ENCODE measurements at regions of chr3 and their contacts with region 1.

Region 1: DNA sequence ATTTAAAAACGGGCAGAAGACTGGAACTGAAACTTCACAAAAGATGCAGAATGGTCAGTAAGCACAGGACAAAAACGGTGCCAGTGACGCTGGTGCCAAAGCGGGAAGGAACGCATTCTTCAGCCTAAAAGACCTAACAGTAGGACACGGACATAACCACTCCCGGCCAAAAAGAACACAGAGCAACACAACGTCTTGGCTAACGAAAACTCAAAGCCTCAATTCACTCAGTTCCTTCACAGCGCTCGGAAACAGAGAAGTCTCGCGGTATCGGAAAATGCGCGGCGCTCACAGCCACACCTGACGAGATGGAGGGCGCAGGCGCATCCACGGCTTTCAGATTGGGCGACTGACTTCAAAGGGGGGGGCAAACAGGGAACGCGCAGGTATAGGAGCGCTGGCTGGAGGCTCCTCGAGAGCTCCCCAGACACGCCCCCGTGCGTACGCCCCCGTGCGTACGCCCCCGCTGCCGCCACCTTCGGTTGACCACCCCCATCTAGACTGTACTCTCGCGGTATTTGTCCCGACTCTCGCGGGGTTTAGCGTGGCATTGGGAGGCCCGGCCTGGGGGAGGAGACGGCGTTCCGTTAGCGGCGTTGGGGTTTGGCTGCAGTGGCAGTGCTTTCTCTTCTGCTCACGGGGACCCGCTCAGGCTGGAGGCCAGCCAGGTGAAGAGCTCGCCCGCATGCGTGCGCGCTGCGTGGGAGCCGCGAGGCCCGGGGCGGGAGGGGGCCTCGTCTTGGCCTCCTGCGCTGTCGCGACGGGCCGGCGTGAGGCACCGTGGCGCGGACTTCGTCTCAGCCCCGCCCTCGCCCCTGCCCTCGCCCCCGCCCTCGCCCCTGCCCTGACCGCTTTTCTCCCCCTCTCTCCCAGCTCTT is at the start of gene NKTR:
- DNase-seq: peak; percentile 99 to 100 (median 99)
- H3K4me3 ChIP-seq: peak within 1 kb of the TSS; percentile 92
- H3K4me3 Mint-ChIP-seq: peak within 1 kb of the TSS; percentile 89 to 98 (median 94)
- H3K27ac ChIP-seq: peak within 1 kb of the TSS; percentile 81
- H3K27ac Mint-ChIP-seq: peak within 1 kb of the TSS; percentile 95 to 100 (median 97)
- H3K4me1 ChIP-seq: peaks cover 33% of the 10 kb centered on the region
- H3K4me1 Mint-ChIP-seq: peaks cover 35 to 48% (median 40%) of the 10 kb centered on the region in 3 donors
- H3K27me3 ChIP-seq: no peaks in the 10 kb centered on the region
- H3K27me3 Mint-ChIP-seq: no peaks in the 10 kb centered on the region
- total RNA-seq, gene NKTR: 54.1 to 58.2 TPM

Region 2: GRCh38 chr3:42387802-42388651 is 212.3 kb before region 1 on chr3:
- CTCF ChIA-PET with region 1: no interaction called
- POLR2A ChIA-PET with region 1: no interaction called
- DNase-seq: peak in 2 of 5 donors; percentile 24 to 51
- H3K4me3 ChIP-seq: no peak overlapping the region
- H3K4me3 Mint-ChIP-seq: peak overlapping the region in 3 of 7 donors; percentile 44 to 69 (median 54)
- H3K27ac ChIP-seq: no peak overlapping the region
- H3K27ac Mint-ChIP-seq: peak overlapping the region in 7 of 8 donors; percentile 10 to 91 (median 77)
- H3K4me1 ChIP-seq: peaks cover 19% of the 10 kb centered on the region
- H3K4me1 Mint-ChIP-seq: peaks cover 21 to 23% (median 21%) of the 10 kb centered on the region in 3 donors
- H3K27me3 ChIP-seq: no peaks in the 10 kb centered on the region
- H3K27me3 Mint-ChIP-seq: peaks cover 1 to 4% of the 10 kb centered on the region in 2 donors

Region 3: DNA sequence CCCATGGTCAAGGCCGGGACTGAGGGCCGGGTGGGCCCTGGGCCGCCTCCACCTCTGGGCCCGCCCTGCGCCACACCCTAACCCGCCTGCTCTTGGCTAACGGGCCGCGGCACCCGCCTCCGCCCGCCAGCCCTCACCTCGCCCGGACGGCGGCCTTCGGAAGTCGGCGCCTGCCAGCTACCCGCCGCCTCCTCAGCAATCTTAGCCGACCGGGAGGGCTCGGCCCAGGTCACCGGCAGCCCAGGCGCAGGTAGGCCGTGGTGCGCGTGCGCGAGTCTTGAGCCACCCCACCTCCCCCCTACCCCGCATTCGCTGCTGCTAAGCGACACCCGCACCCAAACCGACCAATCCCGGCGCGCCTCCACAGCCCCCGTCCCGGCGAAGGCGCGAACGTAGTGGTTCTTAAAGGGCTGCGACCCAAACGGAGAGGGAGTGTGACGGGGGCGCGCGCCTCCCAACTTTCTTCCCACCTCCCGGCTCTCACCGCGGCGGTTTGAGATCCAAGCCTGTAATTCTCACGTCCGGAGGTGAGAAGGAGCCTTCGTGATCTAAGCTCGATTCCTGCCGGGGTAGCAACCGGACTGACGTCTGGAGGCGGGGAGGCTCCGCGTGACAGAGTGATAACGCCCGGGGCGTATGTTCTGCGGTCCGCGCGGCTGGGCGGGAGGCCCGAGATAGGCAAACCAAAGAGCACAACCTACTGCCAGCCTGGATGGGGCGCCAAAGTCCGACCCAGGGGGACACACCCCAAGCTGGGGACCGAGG is 18.5 kb before region 1 on chr3 and contains the start of gene SEC22C:
- CTCF ChIA-PET with region 1: interaction called, 6 read pairs
- POLR2A ChIA-PET with region 1: interaction called, 23 read pairs
- DNase-seq: peak; percentile 93 to 96 (median 95)
- H3K4me3 ChIP-seq: peak within 1 kb of the TSS; percentile 64
- H3K4me3 Mint-ChIP-seq: peak within 1 kb of the TSS; percentile 88 to 98 (median 91)
- H3K27ac ChIP-seq: peak within 1 kb of the TSS; percentile 97
- H3K27ac Mint-ChIP-seq: peak within 1 kb of the TSS; percentile 95 to 99 (median 98)
- H3K4me1 ChIP-seq: peaks cover 30% of the 10 kb centered on the region
- H3K4me1 Mint-ChIP-seq: peaks cover 39 to 53% (median 49%) of the 10 kb centered on the region in 3 donors
- H3K27me3 ChIP-seq: no peaks in the 10 kb centered on the region
- H3K27me3 Mint-ChIP-seq: no peaks in the 10 kb centered on the region
- total RNA-seq, gene SEC22C: 52.6 to 53.6 TPM

Region 4: DNA sequence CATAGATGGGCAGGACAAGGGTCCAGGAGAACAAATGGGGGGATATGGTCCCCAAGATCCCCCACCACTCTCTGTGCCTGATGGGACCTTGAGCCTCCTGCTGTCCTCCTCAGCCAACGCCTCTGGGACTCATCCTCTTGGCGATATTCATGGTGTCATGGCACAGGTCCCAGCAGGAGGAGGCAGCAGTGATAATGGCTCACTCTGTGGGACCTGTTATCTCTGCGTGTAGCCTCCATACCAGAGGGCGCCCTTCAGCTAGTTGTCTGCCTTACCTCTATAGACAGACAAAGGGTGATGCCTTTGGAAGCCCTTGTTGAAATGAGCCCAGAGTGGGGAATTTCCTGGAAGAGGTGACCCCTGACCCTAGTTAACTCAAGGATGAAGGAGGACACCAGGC is 60.5 kb after region 1 on chr3:
- CTCF ChIA-PET with region 1: no interaction called
- POLR2A ChIA-PET with region 1: no interaction called
- DNase-seq: no peak
- H3K4me3 ChIP-seq: no peak overlapping the region
- H3K4me3 Mint-ChIP-seq: no peak overlapping the region
- H3K27ac ChIP-seq: no peak overlapping the region
- H3K27ac Mint-ChIP-seq: no peak overlapping the region
- H3K4me1 ChIP-seq: no peaks in the 10 kb centered on the region
- H3K4me1 Mint-ChIP-seq: peaks cover 0 to 3% (median 0%) of the 10 kb centered on the region in 3 donors
- H3K27me3 ChIP-seq: no peaks in the 10 kb centered on the region
- H3K27me3 Mint-ChIP-seq: peaks cover 0 to 1% of the 10 kb centered on the region in 2 donors